ENCODE measurements at regions of chr12 and their contacts with region 1.

Region 1: GRCh38 chr12:119208622-119209061 is 29.9 kb downstream of the HSPB8 start:
- DNase-seq: peak; percentile 54
- H3K4me3 ChIP-seq: no peak overlapping the region
- H3K27ac ChIP-seq: peak overlapping the region in 3 of 4 donors; percentile 54 to 81 (median 74)
- H3K4me1 ChIP-seq: peaks cover 0 to 11% (median 5%) of the 10 kb centered on the region in 4 donors
- H3K27me3 ChIP-seq: no peaks in the 10 kb centered on the region
- CTCF ChIP-seq: no peak
- EP300 ChIP-seq: peak; percentile 32
- POLR2A ChIP-seq: no peak

Region 2: GRCh38 chr12:119328111-119328510 is 119.5 kb after region 1 on chr12:
- in situ Hi-C with region 1: no loop called
- intact Hi-C with region 1: loop called (anchors 10 kb)
- DNase-seq: peak; percentile 8
- H3K4me3 ChIP-seq: no peak overlapping the region
- H3K27ac ChIP-seq: peak overlapping the region in 2 of 4 donors; percentile 73 to 76
- H3K4me1 ChIP-seq: no peaks in the 10 kb centered on the region
- H3K27me3 ChIP-seq: no peaks in the 10 kb centered on the region
- CTCF ChIP-seq: peak in 3 of 5 experiments; percentile 18 to 35 (median 22)
- EP300 ChIP-seq: no peak
- POLR2A ChIP-seq: no peak